ENCODE measurements at regions of chr2 and their contacts with region 1.

Region 1: DNA sequence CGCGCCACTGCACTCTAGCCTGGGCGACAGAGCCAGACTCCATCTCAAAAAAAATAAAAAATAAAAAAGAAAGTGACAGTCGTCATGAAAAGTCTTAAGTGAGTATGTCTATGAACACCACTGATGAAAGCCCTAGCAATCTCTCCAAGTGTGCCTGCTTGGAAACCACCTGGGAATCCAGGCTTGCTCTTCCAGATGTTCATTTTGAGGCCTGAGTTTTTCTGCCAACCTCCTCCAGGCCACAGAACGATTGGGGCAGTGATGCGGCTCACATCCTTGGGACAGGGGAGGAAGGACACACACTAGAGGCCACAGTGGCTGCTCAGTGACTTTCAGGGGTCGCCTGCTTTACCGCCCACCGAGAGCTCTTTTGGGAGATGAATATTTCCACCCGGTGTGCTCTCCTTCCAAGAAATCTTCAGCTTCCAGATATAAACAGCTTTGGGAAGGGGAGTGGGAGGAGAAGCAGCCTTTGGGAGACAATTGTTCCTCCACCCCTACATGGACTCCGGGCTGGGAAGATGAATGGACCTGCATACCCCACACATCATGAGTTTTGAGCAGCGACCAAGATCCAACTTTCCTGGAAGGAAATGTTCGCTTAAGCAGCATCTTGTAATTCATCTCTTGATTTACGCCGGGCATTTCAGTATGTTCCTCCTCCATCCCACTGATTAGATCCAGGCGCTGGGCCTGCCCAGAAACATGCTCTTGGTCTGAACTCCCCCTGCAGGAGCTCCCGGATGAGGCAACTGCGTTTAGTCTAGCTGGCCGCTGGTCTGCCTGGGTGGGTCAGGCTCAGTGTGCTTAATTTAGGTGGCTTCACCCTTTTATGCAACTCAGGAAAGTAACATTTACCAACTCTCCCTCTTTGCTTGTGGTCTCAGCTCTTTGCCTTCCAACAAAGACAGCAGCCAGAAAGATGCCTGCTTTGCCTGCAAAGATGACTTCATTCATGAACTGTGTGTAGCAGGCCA is 6.2 kb upstream of the ARMC9 start:
- DNase-seq: peak; percentile 79
- H3K4me3 ChIP-seq: no peak overlapping the region
- H3K27ac ChIP-seq: peak overlapping the region; percentile 80
- H3K27me3 ChIP-seq: no peaks in the 10 kb centered on the region
- CTCF ChIP-seq: peak; percentile 87

Region 2: DNA sequence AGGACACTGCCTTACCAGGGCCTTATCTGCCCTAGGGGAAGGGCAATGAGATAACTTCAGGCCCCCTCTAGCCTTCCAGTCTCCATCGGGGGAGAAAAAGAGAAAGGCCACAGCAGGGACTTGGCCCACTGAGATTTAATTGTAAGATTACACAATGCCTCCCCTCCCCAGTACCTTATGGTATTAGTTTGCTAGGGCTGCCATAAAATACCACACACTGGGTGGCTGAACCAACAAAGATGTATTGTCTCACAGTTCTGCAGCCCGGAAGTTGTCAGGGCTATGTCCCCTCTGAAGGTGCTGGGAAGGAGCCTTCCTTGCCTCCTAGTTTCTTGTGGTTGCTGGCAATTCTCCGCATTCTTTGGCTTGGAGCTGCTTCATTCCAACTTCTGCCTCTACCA is 231.1 kb before region 1 on chr2:
- CTCF ChIA-PET with region 1: no interaction called
- POLR2A ChIA-PET with region 1: no interaction called
- DNase-seq: no peak
- H3K4me3 ChIP-seq: no peak overlapping the region
- H3K27ac ChIP-seq: no peak overlapping the region
- H3K27me3 ChIP-seq: peaks cover 17% of the 10 kb centered on the region
- CTCF ChIP-seq: no peak

Region 3: DNA sequence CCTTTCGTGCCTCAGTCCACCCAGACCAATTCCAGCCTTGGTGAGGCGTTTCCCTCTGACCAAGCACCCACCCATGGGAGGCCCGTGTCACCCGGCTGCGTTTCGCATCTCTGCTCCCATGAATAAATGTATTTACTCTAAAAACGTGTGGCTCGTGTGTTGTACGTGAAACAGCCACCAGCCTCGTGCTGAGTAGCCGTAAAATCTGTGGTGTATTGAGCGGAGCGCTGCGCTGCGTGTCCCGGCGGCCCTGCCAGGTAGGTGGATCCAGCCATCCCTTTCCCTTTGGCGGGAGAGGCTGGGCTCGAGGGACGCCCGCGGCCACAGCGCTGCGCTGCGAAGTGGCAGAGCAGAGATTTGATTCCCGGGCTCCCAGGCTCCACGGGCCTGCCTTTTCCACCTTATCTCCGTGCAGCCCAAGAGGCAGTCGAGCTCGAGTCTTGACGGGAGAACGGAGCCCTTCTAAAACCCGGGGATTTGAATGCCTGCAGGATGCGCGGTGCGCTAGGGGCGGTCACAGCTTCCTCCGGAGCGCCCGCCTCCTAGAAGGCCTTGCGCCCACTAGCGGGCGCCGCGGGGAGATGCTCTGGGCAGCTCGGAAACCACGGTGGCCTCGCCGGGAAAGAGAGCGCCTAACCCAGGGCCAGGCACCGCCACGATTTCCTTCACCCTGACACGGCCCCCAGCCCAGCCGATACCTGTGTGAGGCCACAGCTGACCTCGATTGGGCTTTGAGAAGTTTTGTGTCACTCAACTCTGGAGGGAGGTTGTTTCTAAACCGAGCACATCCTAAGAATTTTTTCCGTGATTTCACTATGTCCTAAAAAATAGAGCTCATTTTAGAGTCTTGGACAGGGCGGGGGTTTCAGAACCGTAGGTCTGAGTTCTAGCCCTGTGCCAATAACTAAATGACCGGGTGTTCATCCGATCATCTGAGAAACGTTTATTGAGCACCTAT is 139.4 kb before region 1 on chr2:
- CTCF ChIA-PET with region 1: interaction called, 12 read pairs
- POLR2A ChIA-PET with region 1: no interaction called
- DNase-seq: peak; percentile 50
- H3K4me3 ChIP-seq: peak overlapping the region; percentile 67
- H3K27ac ChIP-seq: no peak overlapping the region
- H3K27me3 ChIP-seq: peaks cover 19% of the 10 kb centered on the region
- CTCF ChIP-seq: peak; percentile 97

Region 4: GRCh38 chr2:231104115-231104713 is 88.0 kb before region 1 on chr2:
- CTCF ChIA-PET with region 1: interaction called, 125 read pairs
- POLR2A ChIA-PET with region 1: interaction called, 4 read pairs
- DNase-seq: peak; percentile 44
- H3K4me3 ChIP-seq: no peak overlapping the region
- H3K27ac ChIP-seq: no peak overlapping the region
- H3K27me3 ChIP-seq: no peaks in the 10 kb centered on the region
- CTCF ChIP-seq: peak; percentile 94

Region 5: GRCh38 chr2:231110551-231110950 is 81.6 kb before region 1 on chr2:
- CTCF ChIA-PET with region 1: interaction called, 125 read pairs
- POLR2A ChIA-PET with region 1: no interaction called
- DNase-seq: no peak
- H3K4me3 ChIP-seq: no peak overlapping the region
- H3K27ac ChIP-seq: no peak overlapping the region
- H3K27me3 ChIP-seq: no peaks in the 10 kb centered on the region
- CTCF ChIP-seq: peak; percentile 47

Region 6: GRCh38 chr2:231123362-231123898 is 68.8 kb before region 1 on chr2:
- CTCF ChIA-PET with region 1: interaction called, 14 read pairs
- POLR2A ChIA-PET with region 1: no interaction called
- DNase-seq: no peak
- H3K4me3 ChIP-seq: peak overlapping the region; percentile 8
- H3K27ac ChIP-seq: no peak overlapping the region
- H3K27me3 ChIP-seq: no peaks in the 10 kb centered on the region
- CTCF ChIP-seq: no peak

Region 7: DNA sequence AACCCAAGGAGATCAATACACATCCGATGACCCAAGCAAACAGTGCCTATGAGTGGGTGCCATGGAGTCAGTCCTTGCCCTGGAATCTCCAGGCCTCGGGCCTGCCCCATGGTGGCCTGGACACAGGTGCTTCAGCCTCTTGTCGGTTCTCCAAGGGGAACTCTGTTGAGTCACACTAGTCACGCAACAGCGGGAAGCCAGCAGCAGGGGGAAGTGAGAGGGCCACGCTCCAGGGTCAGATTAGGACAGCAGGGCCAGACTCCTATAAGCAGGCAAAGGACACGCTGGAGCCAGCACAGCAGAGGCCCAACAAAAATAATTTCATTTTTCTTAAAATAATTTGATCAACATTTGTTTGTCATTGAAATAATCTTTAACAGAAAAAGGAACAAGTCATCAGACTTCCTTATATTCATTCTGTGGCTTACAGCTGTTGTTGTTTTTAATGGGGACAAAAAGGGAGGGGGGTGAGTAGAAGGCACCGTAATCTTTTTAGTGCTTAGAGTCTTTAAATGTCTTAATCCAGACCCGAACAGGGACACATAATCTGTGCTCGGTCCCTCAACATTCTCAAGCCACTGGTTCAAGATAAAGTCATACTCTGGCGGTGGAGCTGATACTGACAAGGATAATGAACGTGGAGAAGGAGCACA is 10.2 kb before region 1 on chr2:
- CTCF ChIA-PET with region 1: interaction called, 11 read pairs
- POLR2A ChIA-PET with region 1: no interaction called
- DNase-seq: no peak
- H3K4me3 ChIP-seq: no peak overlapping the region
- H3K27ac ChIP-seq: no peak overlapping the region
- H3K27me3 ChIP-seq: no peaks in the 10 kb centered on the region
- CTCF ChIP-seq: no peak

Region 8: DNA sequence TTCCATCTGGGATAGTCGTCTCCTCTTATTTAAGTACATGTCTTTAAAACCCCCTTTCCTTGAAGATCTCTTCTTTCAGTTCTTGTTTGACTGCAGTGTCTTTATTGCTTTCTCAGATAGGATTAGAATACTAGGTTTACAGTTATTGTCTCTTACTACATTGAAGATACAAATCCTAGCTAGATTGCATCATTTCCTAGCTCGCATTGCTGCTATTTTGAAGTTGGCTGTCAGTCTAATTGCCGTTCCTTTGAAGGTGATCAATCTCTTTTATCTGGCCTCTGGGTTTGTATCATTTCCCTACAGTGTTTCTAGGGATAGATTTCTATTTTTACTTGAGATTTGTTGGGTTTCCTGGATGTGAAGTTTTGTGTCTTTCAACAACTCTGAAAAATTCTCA is 27.1 kb after region 1 on chr2:
- CTCF ChIA-PET with region 1: interaction called, 10 read pairs
- POLR2A ChIA-PET with region 1: interaction called, 3 read pairs
- DNase-seq: no peak
- H3K4me3 ChIP-seq: no peak overlapping the region
- H3K27ac ChIP-seq: no peak overlapping the region
- H3K27me3 ChIP-seq: no peaks in the 10 kb centered on the region
- CTCF ChIP-seq: no peak

Region 9: DNA sequence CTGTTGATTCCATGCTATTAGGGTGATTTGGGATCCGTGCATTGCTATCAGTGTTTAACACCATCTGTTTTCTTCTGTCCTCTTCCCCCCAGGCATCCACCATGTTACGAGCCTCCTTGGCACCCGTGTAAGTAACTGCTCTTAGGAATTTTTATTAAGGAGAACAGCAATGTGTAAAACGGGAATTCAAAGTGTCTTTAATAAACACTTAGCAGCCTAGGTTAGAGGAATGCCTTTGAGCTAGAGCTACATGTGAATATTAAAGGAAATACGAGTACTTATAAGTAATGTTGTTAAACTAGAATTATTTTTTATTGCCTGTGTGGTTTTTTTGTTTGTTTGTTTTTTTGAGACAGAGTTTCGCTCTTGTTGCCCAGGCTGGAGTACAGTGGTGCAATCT is 64.3 kb after region 1 on chr2:
- CTCF ChIA-PET with region 1: no interaction called
- POLR2A ChIA-PET with region 1: no interaction called
- DNase-seq: no peak
- H3K4me3 ChIP-seq: no peak overlapping the region
- H3K27ac ChIP-seq: no peak overlapping the region
- H3K27me3 ChIP-seq: no peaks in the 10 kb centered on the region
- CTCF ChIP-seq: no peak

Measured in AG04450 (cell line).